ENCODE measurements at regions of chr14 and their contacts with region 1.

Region 1: GRCh38 chr14:93206793-93207467 is at the starts of genes GON7 and UBR7:
- DNase-seq: peak; percentile 97
- H3K4me3 Mint-ChIP-seq: peak within 1 kb of the TSS; percentile 95
- H3K27ac Mint-ChIP-seq: peak within 1 kb of the TSS; percentile 90
- H3K4me1 Mint-ChIP-seq: peaks cover 8% of the 10 kb centered on the region
- H3K27me3 Mint-ChIP-seq: no peaks in the 10 kb centered on the region
- CTCF ChIP-seq: no peak
- total RNA-seq, gene GON7: 13.3 and 13.5 TPM in 2 replicates
- total RNA-seq, gene UBR7: 16.3 and 20.3 TPM in 2 replicates

Region 2: GRCh38 chr14:93543766-93544165 is 336.8 kb after region 1 on chr14:
- CTCF ChIA-PET with region 1: no interaction called
- intact Hi-C with region 1: loop called (anchors 5 kb)
- DNase-seq: no peak
- H3K4me3 Mint-ChIP-seq: no peak overlapping the region
- H3K27ac Mint-ChIP-seq: no peak overlapping the region
- H3K4me1 Mint-ChIP-seq: no peaks in the 10 kb centered on the region
- H3K27me3 Mint-ChIP-seq: peaks cover 49% of the 10 kb centered on the region
- CTCF ChIP-seq: no peak